CD4-positive, alpha-beta T cell (primary cell): ENCODE measurements at regions of chr6 and their contacts with region 1.

Region 1: GRCh38 chr6:13767121-13767808 is 47.1 kb downstream of the MCUR1 start:
- DNase-seq: peak; percentile 12 to 67 (median 38)
- ATAC-seq: peak; percentile 51
- H3K4me3 ChIP-seq: peak overlapping the region; percentile 24
- H3K4me3 Mint-ChIP-seq: peak overlapping the region; percentile 44
- H3K27ac ChIP-seq: no peak overlapping the region
- H3K27ac Mint-ChIP-seq: no peak overlapping the region
- H3K4me1 ChIP-seq: peaks cover 26% of the 10 kb centered on the region
- H3K4me1 Mint-ChIP-seq: peaks cover 38% of the 10 kb centered on the region
- H3K27me3 ChIP-seq: no peaks in the 10 kb centered on the region
- H3K27me3 Mint-ChIP-seq: no peaks in the 10 kb centered on the region
- CTCF ChIP-seq: peak; percentile 55

Region 2: DNA sequence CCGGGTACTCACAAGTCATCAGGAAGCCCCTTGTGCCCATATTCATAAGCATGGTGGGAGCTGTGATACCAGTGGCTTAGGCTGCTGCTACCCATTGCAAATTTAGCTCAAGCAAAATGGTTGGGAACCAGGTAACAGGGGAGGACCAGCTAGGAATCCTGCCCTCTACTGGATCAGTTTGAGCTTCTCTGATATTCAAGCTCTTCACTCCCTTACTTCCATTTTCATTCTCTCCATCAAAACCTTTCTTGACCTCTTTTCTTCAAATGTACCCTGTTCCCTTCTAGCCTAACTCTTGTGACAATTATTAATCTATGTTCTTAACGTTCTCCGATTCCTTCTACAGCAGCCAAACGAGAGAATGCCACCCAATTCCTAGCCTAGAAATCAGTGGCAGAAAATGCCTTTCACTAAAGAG is 142.4 kb before region 1 on chr6:
- CTCF ChIA-PET with region 1: no interaction called
- POLR2A ChIA-PET with region 1: interaction called, 3 read pairs
- intact Hi-C with region 1: loop called in 1 of 2 experiments (anchors 5 kb)
- DNase-seq: peak in 7 of 14 experiments; percentile 2 to 72 (median 26)
- ATAC-seq: peak; percentile 92
- H3K4me3 ChIP-seq: no peak overlapping the region
- H3K4me3 Mint-ChIP-seq: no peak overlapping the region
- H3K27ac ChIP-seq: no peak overlapping the region
- H3K27ac Mint-ChIP-seq: peak overlapping the region; percentile 70
- H3K4me1 ChIP-seq: no peaks in the 10 kb centered on the region
- H3K4me1 Mint-ChIP-seq: peaks cover 6% of the 10 kb centered on the region
- H3K27me3 ChIP-seq: no peaks in the 10 kb centered on the region
- H3K27me3 Mint-ChIP-seq: no peaks in the 10 kb centered on the region
- CTCF ChIP-seq: peak; percentile 42

Region 3: DNA sequence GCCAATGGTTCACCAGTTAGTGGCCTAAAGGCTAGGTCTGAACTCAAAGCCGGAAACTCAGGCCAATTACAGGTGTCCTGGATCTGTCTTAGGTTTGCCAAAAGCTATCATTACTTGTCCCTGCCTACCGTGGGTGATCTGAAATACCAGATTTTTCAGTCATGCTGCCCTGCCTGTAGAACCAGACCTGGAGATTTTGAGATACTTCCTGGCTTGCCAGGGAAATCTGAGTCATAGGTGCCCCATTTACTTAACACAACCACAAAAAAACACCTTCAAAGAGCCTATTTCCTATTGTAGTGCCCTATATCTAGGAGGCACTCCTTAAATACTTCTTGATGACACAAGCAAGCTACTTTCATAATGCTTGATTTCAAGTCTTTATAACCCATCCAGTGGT is 41.7 kb before region 1 on chr6:
- CTCF ChIA-PET with region 1: no interaction called
- POLR2A ChIA-PET with region 1: no interaction called
- intact Hi-C with region 1: no loop called
- DNase-seq: peak in 8 of 14 experiments; percentile 15 to 80 (median 40)
- ATAC-seq: peak; percentile 83
- H3K4me3 ChIP-seq: no peak overlapping the region
- H3K4me3 Mint-ChIP-seq: peak overlapping the region; percentile 58
- H3K27ac ChIP-seq: no peak overlapping the region
- H3K27ac Mint-ChIP-seq: peak overlapping the region; percentile 83
- H3K4me1 ChIP-seq: peaks cover 35% of the 10 kb centered on the region
- H3K4me1 Mint-ChIP-seq: peaks cover 22% of the 10 kb centered on the region
- H3K27me3 ChIP-seq: no peaks in the 10 kb centered on the region
- H3K27me3 Mint-ChIP-seq: no peaks in the 10 kb centered on the region
- CTCF ChIP-seq: no peak